KBM-7 (cell line): ENCODE measurements at regions of chr17 and their contacts with region 1.

Region 1: DNA sequence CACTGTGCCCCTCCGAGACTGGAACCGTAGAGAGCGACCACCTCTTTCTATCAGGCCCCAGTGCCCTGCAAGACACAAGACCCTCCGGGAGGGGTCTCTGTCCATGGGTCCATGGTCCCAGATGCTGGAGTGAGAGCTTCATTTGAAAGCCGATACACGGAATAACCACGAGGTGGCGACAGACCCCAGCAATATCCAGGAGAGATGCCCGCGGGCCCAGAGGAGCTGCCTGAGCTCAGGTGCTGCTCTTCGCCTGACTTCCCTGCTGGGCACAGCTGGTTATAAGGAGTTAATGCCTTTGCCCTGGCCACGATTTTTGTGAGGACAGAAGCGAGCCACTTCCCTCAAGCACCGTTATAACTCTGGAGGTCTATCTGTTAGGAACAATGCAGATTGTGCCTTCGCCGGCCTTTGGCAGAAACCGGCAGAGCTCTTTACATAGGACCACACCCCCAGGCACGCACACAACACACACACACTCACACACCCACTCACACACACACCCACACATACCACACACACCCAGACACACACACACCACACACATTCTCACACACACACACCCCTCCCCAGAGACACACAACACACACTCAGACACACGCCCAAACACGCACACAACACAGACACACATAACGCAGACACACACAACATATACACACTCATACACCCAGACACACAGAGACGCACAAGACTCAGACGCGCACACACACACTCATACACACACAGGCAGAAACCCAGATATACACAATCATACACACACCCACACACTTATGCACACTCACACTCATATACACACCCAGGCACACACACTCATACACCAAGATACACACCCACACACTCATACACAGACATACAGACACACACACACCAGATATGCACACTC is 436.4 kb downstream of the SOX9 start:
- DNase-seq: peak; percentile 74

Region 2: DNA sequence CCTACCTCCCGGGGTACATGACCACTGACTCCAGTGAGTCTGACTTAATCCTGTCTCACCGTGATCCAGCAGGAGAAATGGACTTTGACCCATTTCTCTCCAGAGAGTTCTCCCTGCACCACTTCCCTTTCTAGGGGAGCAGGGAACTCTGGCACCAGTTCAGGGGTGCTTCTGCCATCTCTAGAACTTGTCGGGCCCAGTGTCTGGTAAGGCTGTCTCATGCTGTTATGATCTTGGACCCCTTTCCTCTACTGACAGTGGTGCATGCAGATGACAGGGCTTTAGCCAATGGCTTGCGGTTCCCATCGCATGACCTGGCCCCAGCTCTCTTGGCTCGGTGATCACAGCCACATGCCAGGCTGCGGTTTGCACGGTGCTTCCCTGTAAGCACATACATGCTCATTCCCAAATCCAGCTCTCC is 473.3 kb after region 1 on chr17:
- in situ Hi-C with region 1: no loop called
- DNase-seq: no peak

Region 3: DNA sequence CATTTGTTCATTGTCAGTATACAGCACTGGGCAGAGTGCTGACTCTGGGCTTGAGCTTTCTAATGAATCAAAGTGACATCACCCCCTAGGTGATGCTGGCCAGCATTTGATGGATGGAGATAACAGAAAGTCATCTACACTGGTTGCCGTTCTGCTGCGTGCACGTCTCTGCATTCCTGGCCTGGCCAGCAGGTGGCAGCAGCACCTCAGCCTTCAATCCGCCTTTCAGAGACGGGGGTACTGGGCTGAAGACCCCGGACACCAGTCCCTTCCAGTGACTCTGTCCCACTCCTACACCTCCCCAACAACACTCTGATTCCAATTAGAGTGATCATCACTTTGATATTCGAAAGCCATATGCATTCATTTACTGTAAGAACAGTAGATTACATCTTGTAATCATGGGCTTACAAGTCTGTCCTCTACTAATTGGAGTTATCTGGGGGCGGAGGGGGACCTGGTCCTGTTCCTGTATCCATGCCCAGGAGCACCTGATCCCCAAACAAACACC is 698.5 kb after region 1 on chr17:
- in situ Hi-C with region 1: loop called (anchors 25 kb)
- DNase-seq: peak; percentile 64